BJ (cell line): ENCODE measurements at regions of chr5 and their contacts with region 1.

Region 1: GRCh38 chr5:149544028-149544420 is 7.2 kb downstream of the CSNK1A1 start:
- DNase-seq: no peak
- H3K4me3 ChIP-seq: no peak overlapping the region
- H3K27me3 ChIP-seq: no peaks in the 10 kb centered on the region
- CTCF ChIP-seq: no peak

Region 2: GRCh38 chr5:149514512-149514911 is 29.5 kb before region 1 on chr5:
- CTCF ChIA-PET with region 1: interaction called, 5 read pairs
- POLR2A ChIA-PET with region 1: interaction called, 10 read pairs
- DNase-seq: no peak
- H3K4me3 ChIP-seq: no peak overlapping the region
- H3K27me3 ChIP-seq: no peaks in the 10 kb centered on the region
- CTCF ChIP-seq: no peak